ENCODE measurements at regions of chr19 and their contacts with region 1.

Region 1: GRCh38 chr19:40713939-40714338 is 2.7 kb downstream of the COQ8B start:
- DNase-seq: no peak
- ATAC-seq: no peak

Region 2: DNA sequence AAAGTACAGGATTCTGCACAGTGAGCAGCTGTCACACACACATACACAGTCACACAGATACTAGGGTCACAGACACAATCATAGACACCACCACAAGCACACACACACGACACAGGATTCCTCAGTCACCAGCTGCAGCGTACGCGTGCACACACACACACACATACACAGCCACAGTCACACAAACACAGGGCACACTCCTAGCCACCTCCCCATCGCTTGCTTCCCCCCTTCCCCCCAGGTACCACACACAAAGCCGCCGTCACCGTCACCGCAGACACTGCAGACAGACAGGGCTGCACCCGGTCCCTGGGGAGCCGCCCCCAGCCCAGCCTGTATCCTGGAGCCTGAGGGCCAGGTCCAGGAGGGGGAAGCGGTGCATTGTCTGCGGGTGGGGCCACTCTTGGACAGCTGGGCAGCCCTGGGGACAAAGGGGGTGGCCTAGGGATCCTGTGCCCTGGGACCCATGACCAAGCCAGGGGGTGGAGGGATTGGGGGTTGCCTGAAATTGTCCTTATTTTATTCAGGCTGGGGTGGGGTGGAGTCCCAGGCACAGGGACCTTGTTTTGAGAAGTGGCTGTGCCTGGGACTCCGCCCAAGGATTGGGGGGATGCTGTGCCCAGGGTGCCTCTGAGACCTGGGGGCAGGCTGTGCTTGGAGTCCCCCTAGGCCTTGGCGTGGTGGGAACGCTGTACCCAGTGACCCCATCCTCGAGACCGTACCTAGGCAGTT is 24.5 kb before region 1 on chr19:
- intact Hi-C with region 1: loop called (anchors 2 kb)
- DNase-seq: peak; percentile 70
- ATAC-seq: no peak

Measured in sciatic nerve (tissue), 2 donors.